BJ (cell line): ENCODE measurements at regions of chr12 and their contacts with region 1.

Region 1: DNA sequence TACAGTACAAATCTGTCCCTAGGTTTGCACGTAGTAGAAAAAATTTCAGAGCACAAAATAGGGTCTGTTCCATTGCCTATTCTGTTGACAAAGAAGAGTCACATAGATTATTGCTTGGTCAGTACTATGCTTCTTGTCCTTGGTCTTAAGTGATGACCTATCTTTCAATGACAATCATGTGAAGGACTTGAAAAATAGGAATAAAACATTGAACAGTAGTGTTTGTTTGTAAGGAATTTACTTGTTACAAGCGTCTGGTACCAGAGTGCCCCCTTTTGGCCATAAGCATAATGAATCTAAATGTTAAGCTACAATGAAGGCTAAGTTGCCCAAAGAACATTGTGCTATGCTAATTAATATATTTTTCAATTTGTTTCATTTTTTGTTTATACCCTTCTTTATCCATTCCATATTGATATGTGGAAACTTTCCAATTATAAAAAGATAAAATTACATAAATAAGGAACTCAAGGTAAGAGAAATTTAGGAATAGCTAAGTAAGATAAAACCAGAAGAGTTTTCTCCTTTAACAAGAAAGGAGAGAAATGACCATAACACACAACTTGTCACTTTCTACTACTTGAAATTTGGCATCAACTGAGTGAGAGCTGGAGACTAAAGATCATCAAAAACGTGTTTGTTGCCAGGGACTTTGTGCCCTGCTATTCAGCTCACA is 204.7 kb downstream of the EPS8 start:
- DNase-seq: no peak
- H3K4me3 ChIP-seq: no peak overlapping the region
- H3K27me3 ChIP-seq: no peaks in the 10 kb centered on the region
- CTCF ChIP-seq: peak; percentile 74

Region 2: GRCh38 chr12:15276088-15276698 is 308.3 kb before region 1 on chr12:
- CTCF ChIA-PET with region 1: interaction called, 13 read pairs
- POLR2A ChIA-PET with region 1: no interaction called
- DNase-seq: no peak
- H3K4me3 ChIP-seq: no peak overlapping the region
- H3K27me3 ChIP-seq: no peaks in the 10 kb centered on the region; the same call in 1 of the 2 replicates
- CTCF ChIP-seq: peak; percentile 60

Region 3: DNA sequence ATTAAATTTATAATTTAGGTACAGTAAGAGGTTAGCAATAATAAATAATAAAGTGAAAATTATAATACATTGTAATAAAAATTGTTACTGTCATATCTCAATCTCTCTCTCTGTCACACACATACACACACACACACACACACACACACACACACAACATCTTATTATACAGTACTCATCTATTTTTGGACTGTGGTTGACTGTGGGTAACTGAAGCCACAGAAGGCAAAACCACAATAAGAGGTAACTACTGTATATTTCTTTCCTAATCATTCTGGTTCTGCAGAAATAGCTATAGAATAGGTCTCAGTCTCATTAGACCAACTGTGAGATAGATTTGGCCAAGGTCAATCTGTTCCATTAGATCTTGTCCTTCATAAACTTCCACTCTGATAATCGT is 295.3 kb before region 1 on chr12:
- CTCF ChIA-PET with region 1: no interaction called
- POLR2A ChIA-PET with region 1: interaction called, 11 read pairs
- DNase-seq: no peak
- H3K4me3 ChIP-seq: no peak overlapping the region
- H3K27me3 ChIP-seq: no peaks in the 10 kb centered on the region
- CTCF ChIP-seq: no peak

Region 4: GRCh38 chr12:15522565-15523187 is 61.8 kb before region 1 on chr12:
- CTCF ChIA-PET with region 1: interaction called, 14 read pairs
- POLR2A ChIA-PET with region 1: no interaction called
- DNase-seq: no peak
- H3K4me3 ChIP-seq: no peak overlapping the region
- H3K27me3 ChIP-seq: peaks cover 6% of the 10 kb centered on the region
- CTCF ChIP-seq: peak; percentile 50

Region 5: GRCh38 chr12:15601210-15601800 is 16.8 kb after region 1 on chr12:
- CTCF ChIA-PET with region 1: no interaction called
- POLR2A ChIA-PET with region 1: no interaction called
- DNase-seq: no peak
- H3K4me3 ChIP-seq: no peak overlapping the region
- H3K27me3 ChIP-seq: no peaks in the 10 kb centered on the region
- CTCF ChIP-seq: no peak